ENCODE measurements at regions of chr12 and their contacts with region 1.

Region 1: GRCh38 chr12:121712461-121713256 is at the start of gene TMEM120B:
- DNase-seq: peak; percentile 75 to 91 (median 86)
- H3K4me3 ChIP-seq: peak within 1 kb of the TSS; percentile 89
- H3K4me3 Mint-ChIP-seq: peak within 1 kb of the TSS; percentile 92 to 99 (median 95)
- H3K27ac ChIP-seq: peak within 1 kb of the TSS; percentile 70
- H3K27ac Mint-ChIP-seq: peak within 1 kb of the TSS; percentile 86 to 99 (median 92)
- H3K4me1 ChIP-seq: peaks cover 17% of the 10 kb centered on the region
- H3K4me1 Mint-ChIP-seq: peaks cover 14 to 26% (median 18%) of the 10 kb centered on the region in 3 donors
- H3K27me3 ChIP-seq: no peaks in the 10 kb centered on the region
- H3K27me3 Mint-ChIP-seq: peaks cover 0 to 2% of the 10 kb centered on the region in 2 donors
- total RNA-seq, gene TMEM120B: 12.5 to 15.2 TPM

Region 2: DNA sequence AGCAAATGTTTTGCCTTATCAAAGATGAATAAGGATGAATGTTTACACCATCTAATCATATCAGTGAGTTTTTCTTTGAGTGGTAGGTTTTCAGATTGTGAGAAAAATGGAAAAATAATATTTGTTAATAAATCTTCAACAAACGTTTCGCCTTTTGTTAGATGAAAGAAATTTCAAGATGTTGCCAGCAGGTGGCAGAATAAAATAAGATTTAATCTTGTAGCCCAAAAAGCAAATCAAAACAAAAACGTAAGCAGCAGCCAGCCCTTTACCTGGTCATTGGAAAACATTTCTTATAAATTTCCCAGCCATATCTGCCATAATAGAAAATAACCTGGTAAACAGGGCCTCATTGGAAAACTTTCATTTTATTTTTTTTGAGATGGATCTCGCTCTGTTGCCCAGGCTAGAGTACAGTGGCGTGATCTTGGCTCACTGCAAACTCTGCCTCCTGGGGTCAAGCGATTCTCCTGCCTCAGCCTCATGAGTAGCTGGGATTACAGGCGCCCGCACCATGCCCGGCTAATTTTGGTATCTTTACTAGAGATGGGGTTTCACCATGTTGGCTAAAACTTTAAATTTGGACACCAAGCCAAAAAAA is 15.5 kb before region 1 on chr12:
- CTCF ChIA-PET with region 1: interaction called, 11 read pairs
- POLR2A ChIA-PET with region 1: no interaction called
- DNase-seq: peak in 2 of 5 donors; percentile 54 to 61
- H3K4me3 ChIP-seq: no peak overlapping the region
- H3K4me3 Mint-ChIP-seq: peak overlapping the region in 1 of 7 donors; percentile 32
- H3K27ac ChIP-seq: no peak overlapping the region
- H3K27ac Mint-ChIP-seq: no peak overlapping the region
- H3K4me1 ChIP-seq: peaks cover 4% of the 10 kb centered on the region
- H3K4me1 Mint-ChIP-seq: peaks cover 2 to 6% (median 5%) of the 10 kb centered on the region in 3 donors
- H3K27me3 ChIP-seq: no peaks in the 10 kb centered on the region
- H3K27me3 Mint-ChIP-seq: no peaks in the 10 kb centered on the region

Region 3: GRCh38 chr12:121781998-121782979 is 69.6 kb after region 1 on chr12:
- CTCF ChIA-PET with region 1: no interaction called
- POLR2A ChIA-PET with region 1: no interaction called
- DNase-seq: peak; percentile 33 to 71 (median 47)
- H3K4me3 ChIP-seq: peak overlapping the region; percentile 31
- H3K4me3 Mint-ChIP-seq: peak overlapping the region; percentile 71 to 83 (median 77)
- H3K27ac ChIP-seq: peak overlapping the region; percentile 33
- H3K27ac Mint-ChIP-seq: peak overlapping the region; percentile 91 to 99 (median 96)
- H3K4me1 ChIP-seq: peaks cover 64% of the 10 kb centered on the region
- H3K4me1 Mint-ChIP-seq: peaks cover 51 to 75% (median 57%) of the 10 kb centered on the region in 3 donors
- H3K27me3 ChIP-seq: no peaks in the 10 kb centered on the region
- H3K27me3 Mint-ChIP-seq: peaks cover 0 to 2% of the 10 kb centered on the region in 2 donors